WTC11 (cell line): ENCODE measurements at regions of chr7 and their contacts with region 1.

Region 1: GRCh38 chr7:1459522-1459892 is 237 bp upstream of the MICALL2 start:
- DNase-seq: peak; percentile 100
- ATAC-seq: peak; percentile 96
- H3K4me3 Mint-ChIP-seq: no peak overlapping the region
- H3K27ac Mint-ChIP-seq: no peak overlapping the region
- H3K4me1 Mint-ChIP-seq: peaks cover 16% of the 10 kb centered on the region
- H3K27me3 Mint-ChIP-seq: no peaks in the 10 kb centered on the region
- CTCF ChIP-seq: no peak

Region 2: DNA sequence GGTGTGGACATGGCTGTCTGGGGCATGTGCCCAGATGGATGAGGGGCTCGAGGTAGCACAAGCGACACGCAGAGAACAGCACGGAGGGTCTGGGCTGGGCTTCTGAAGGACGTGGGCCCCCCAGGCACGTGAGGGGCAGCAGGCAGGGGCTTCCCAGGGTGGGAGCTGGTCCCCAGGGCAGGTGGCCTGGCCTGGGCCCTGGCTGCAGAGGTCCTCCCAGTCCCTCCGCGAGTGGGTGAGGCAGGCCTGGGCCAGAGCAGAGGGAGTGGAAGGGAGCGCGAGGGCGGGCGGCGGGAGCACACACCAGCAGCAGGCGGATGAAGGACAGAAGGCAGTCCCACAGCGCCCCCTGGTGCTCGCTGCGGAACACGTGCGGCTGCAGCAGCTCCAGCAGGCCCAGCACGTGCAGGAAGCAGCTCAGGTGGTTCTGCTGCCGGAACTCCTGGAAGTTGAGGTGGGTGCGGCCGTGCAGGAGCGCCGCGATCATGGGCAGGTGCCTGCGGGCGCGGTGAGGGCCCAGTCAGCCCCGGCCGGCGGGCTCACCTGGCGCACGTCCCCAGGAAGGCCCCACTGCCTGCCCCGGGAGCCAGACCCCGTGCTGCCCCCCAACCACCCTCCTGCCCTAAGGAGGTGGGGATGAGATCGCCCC is 14.5 kb after region 1 on chr7:
- CTCF ChIA-PET with region 1: interaction called, 23 read pairs
- POLR2A ChIA-PET with region 1: no interaction called
- DNase-seq: peak; percentile 94
- ATAC-seq: peak; percentile 86
- H3K4me3 Mint-ChIP-seq: no peak overlapping the region
- H3K27ac Mint-ChIP-seq: no peak overlapping the region
- H3K4me1 Mint-ChIP-seq: no peaks in the 10 kb centered on the region
- H3K27me3 Mint-ChIP-seq: no peaks in the 10 kb centered on the region
- CTCF ChIP-seq: peak; percentile 93

Region 3: GRCh38 chr7:1512781-1513656 is 53.5 kb after region 1 on chr7:
- CTCF ChIA-PET with region 1: no interaction called
- POLR2A ChIA-PET with region 1: no interaction called
- DNase-seq: no peak
- ATAC-seq: no peak
- H3K4me3 Mint-ChIP-seq: no peak overlapping the region
- H3K27ac Mint-ChIP-seq: no peak overlapping the region
- H3K4me1 Mint-ChIP-seq: no peaks in the 10 kb centered on the region
- H3K27me3 Mint-ChIP-seq: no peaks in the 10 kb centered on the region
- CTCF ChIP-seq: no peak